Motor neuron (in vitro differentiated cells): ENCODE measurements at regions of chr12 and their contacts with region 1.

Region 1: GRCh38 chr12:66269757-66270383 is 32.4 kb upstream of the HELB start:
- ATAC-seq: peak in 4 of 8 experiments; percentile 54 to 88 (median 80)
- H3K4me3 ChIP-seq: no peak overlapping the region
- H3K27ac ChIP-seq: no peak overlapping the region
- H3K4me1 ChIP-seq: no peaks in the 10 kb centered on the region

Region 2: GRCh38 chr12:66409195-66409871 is 139.5 kb after region 1 on chr12:
- in situ Hi-C with region 1: loop called in 1 of 9 experiments (anchors 10 kb)
- ATAC-seq: peak in 3 of 8 experiments; percentile 61 to 80 (median 64)
- H3K4me3 ChIP-seq: no peak overlapping the region
- H3K27ac ChIP-seq: no peak overlapping the region
- H3K4me1 ChIP-seq: no peaks in the 10 kb centered on the region

Region 3: GRCh38 chr12:66693901-66694675 is 424.2 kb after region 1 on chr12:
- in situ Hi-C with region 1: loop called in 1 of 9 experiments (anchors 25 kb)
- ATAC-seq: peak; percentile 83 to 92 (median 88)
- H3K4me3 ChIP-seq: no peak overlapping the region
- H3K27ac ChIP-seq: no peak overlapping the region
- H3K4me1 ChIP-seq: peaks cover 0 to 17% of the 10 kb centered on the region in 2 donors